Aorta (tissue), 5 donors: ENCODE measurements at regions of chr12 and their contacts with region 1.

Region 1: GRCh38 chr12:80118565-80119324 is 19.4 kb downstream of the OTOGL start:
- DNase-seq: no peak
- ATAC-seq: peak; percentile 64
- H3K4me3 ChIP-seq: no peak overlapping the region
- H3K27ac ChIP-seq: peak overlapping the region; percentile 37 to 82
- H3K4me1 ChIP-seq: peaks cover 2 to 18% of the 10 kb centered on the region in 2 donors
- H3K27me3 ChIP-seq: no peaks in the 10 kb centered on the region

Region 2: DNA sequence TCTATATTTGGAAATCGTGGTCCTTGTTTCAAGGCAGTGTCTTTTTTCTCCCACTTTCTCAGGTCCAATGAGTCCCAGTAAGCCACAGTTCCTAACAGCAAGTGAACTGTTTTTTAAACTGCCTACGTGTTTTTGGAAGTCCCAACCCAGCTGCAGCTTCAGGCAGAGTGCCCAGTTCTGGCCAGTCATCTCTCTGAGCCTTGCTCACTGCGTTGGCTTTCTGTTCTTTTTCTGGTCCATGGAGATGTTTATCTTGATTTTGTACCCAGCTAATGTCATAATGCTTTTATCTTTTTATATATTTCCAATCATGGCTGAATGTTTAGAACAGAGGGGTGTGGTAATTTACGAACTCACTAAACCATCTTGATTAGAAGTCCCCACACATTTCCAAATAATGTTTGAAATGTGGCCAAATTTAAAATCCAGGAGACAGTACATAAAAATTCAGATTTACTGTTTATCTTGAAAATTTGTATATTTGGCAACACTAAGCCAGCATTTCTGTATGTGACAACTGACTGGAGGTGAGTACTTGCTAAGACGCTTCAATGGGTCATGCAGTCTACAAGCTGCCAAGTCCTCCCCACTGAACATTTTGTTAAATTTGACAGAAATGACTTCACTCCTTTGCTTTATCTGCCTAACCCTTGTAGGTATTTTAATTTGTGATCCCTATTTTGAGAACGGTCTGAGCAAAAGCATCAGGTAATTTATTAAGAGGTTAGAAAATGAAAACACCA is 65.5 kb before region 1 on chr12:
- intact Hi-C with region 1: loop called in 1 of 2 experiments (anchors 5 kb)
- DNase-seq: peak; percentile 91 to 93
- ATAC-seq: peak; percentile 86
- H3K4me3 ChIP-seq: peak overlapping the region in 1 of 2 donors; percentile 15
- H3K27ac ChIP-seq: peak overlapping the region in 1 of 2 donors; percentile 57
- H3K4me1 ChIP-seq: no peaks in the 10 kb centered on the region
- H3K27me3 ChIP-seq: no peaks in the 10 kb centered on the region

Region 3: GRCh38 chr12:80485222-80485987 is 366.7 kb after region 1 on chr12:
- intact Hi-C with region 1: no loop called
- DNase-seq: no peak
- ATAC-seq: no peak
- H3K4me3 ChIP-seq: no peak overlapping the region
- H3K27ac ChIP-seq: no peak overlapping the region
- H3K4me1 ChIP-seq: no peaks in the 10 kb centered on the region
- H3K27me3 ChIP-seq: no peaks in the 10 kb centered on the region